ENCODE measurements at regions of chr1 and their contacts with region 1.

Region 1: DNA sequence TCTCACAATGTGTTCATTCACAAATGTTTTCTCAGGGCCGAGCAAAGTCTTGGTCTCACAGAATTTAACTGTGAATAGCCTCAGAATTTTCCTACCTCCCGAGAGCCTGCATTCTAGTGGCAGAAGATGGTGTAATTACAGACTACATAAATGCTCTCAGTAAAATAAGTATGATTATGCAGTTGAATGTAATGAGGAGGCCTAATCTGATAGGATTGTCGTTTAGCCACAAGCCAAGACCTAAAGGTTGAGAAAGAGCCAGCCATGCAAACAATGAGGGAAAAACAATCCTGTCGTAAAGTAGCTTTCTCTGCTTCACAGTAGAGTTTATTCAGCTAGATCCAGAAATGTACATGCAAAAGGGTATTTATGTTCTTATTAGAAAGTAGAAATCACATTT is 607.8 kb upstream of the B3GALT2 start:
- DNase-seq: no peak
- H3K4me3 ChIP-seq: no peak overlapping the region
- H3K27ac ChIP-seq: no peak overlapping the region
- H3K4me1 ChIP-seq: no peaks in the 10 kb centered on the region
- H3K27me3 ChIP-seq: no peaks in the 10 kb centered on the region
- CTCF ChIP-seq: no peak
- EP300 ChIP-seq: no peak
- POLR2A ChIP-seq: no peak

Region 2: GRCh38 chr1:193763266-193763665 is 31.0 kb before region 1 on chr1:
- intact Hi-C with region 1: loop called in 1 of 4 experiments (anchors 1 kb)
- DNase-seq: no peak
- H3K4me3 ChIP-seq: no peak overlapping the region
- H3K27ac ChIP-seq: no peak overlapping the region
- H3K4me1 ChIP-seq: no peaks in the 10 kb centered on the region
- H3K27me3 ChIP-seq: no peaks in the 10 kb centered on the region
- CTCF ChIP-seq: no peak
- EP300 ChIP-seq: no peak
- POLR2A ChIP-seq: no peak

Region 3: DNA sequence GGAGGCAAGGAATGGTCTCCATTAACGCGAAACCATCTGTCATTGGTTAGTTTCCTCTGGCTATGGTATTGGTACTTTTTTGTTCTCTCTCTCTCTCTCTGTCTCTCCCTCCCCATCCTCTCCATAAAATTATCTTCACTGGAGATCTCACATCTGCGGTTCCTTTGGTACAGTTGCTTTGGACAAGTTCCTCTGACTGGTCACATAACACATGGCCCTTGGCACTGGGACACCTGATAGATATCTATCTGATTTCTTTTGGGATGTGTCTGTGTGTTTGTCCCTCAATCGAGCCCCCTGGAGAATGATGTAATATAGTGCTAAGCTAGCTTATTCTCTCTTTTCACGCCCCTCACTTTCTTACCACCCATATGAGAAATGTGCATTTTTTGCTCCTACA is 74.2 kb after region 1 on chr1:
- intact Hi-C with region 1: no loop called
- DNase-seq: no peak
- H3K4me3 ChIP-seq: no peak overlapping the region
- H3K27ac ChIP-seq: no peak overlapping the region
- H3K4me1 ChIP-seq: no peaks in the 10 kb centered on the region
- H3K27me3 ChIP-seq: no peaks in the 10 kb centered on the region
- CTCF ChIP-seq: no peak
- EP300 ChIP-seq: no peak
- POLR2A ChIP-seq: no peak

Region 4: DNA sequence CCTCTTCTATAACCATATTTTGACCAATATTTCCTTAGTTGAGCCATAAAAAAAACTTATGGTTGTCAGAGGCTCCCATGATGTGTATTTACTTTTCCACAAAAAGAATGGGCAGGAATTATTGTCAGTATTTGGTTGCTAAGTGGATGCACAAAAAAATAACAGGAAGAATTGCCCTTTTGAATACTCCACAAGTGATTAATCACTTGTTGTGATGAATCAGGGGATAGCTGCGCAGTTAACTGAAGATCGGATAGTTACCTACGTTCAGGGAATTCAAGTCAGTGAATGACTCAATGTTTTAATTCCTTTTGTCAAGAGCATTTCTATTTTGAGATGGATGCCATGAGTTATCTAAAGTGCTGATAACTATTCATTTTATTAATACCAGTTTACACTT is 177.4 kb after region 1 on chr1:
- intact Hi-C with region 1: no loop called
- DNase-seq: no peak
- H3K4me3 ChIP-seq: no peak overlapping the region
- H3K27ac ChIP-seq: no peak overlapping the region
- H3K4me1 ChIP-seq: no peaks in the 10 kb centered on the region
- H3K27me3 ChIP-seq: no peaks in the 10 kb centered on the region
- CTCF ChIP-seq: no peak
- EP300 ChIP-seq: no peak
- POLR2A ChIP-seq: no peak

Region 5: DNA sequence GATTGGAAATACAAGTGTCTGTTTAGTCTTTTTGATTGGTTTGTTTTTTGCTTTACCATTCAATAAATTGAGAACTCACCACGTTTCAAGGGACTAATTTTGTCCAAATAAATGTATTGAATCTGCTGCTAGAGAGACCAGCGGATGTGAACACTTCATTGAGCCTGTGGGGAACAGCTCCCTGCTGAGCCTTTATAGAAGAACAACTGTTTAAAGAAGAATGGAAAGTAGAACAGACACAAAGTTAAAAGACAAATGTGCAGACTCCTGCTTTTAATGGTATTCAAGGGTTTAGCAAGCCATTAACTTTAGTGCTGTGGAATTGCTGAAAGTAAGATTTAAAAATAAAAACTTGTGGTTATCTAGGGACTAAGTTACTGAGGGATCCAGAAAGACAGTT is 209.9 kb after region 1 on chr1:
- intact Hi-C with region 1: no loop called
- DNase-seq: no peak
- H3K4me3 ChIP-seq: no peak overlapping the region
- H3K27ac ChIP-seq: no peak overlapping the region
- H3K4me1 ChIP-seq: no peaks in the 10 kb centered on the region
- H3K27me3 ChIP-seq: no peaks in the 10 kb centered on the region
- CTCF ChIP-seq: no peak
- EP300 ChIP-seq: no peak
- POLR2A ChIP-seq: no peak